ENCODE measurements at regions of chr7 and their contacts with region 1.

Region 1: GRCh38 chr7:30459591-30460257 is 18.9 kb downstream of the NOD1 start:
- DNase-seq: peak; percentile 62
- H3K4me3 ChIP-seq: peak overlapping the region; percentile 29 to 42
- H3K27ac ChIP-seq: peak overlapping the region; percentile 73 to 95
- H3K4me1 ChIP-seq: peaks cover 8 to 39% of the 10 kb centered on the region in 2 experiments
- H3K27me3 ChIP-seq: no peaks in the 10 kb centered on the region
- CTCF ChIP-seq: no peak
- EP300 ChIP-seq: peak; percentile 13 to 87; a peak in 2 of 4 replicates
- RAD21 ChIP-seq: peak; percentile 12; the same call in 1 of the 2 replicates

Region 2: GRCh38 chr7:30406664-30407425 is 52.9 kb before region 1 on chr7:
- CTCF ChIA-PET with region 1: no interaction called
- POLR2A ChIA-PET with region 1: no interaction called
- DNase-seq: no peak
- H3K4me3 ChIP-seq: no peak overlapping the region
- H3K27ac ChIP-seq: no peak overlapping the region
- H3K4me1 ChIP-seq: peaks cover 0 to under 1% of the 10 kb centered on the region in 2 experiments; a peak in 1 of 4 replicates
- H3K27me3 ChIP-seq: no peaks in the 10 kb centered on the region
- CTCF ChIP-seq: no peak
- EP300 ChIP-seq: no peak
- RAD21 ChIP-seq: no peak

Region 3: DNA sequence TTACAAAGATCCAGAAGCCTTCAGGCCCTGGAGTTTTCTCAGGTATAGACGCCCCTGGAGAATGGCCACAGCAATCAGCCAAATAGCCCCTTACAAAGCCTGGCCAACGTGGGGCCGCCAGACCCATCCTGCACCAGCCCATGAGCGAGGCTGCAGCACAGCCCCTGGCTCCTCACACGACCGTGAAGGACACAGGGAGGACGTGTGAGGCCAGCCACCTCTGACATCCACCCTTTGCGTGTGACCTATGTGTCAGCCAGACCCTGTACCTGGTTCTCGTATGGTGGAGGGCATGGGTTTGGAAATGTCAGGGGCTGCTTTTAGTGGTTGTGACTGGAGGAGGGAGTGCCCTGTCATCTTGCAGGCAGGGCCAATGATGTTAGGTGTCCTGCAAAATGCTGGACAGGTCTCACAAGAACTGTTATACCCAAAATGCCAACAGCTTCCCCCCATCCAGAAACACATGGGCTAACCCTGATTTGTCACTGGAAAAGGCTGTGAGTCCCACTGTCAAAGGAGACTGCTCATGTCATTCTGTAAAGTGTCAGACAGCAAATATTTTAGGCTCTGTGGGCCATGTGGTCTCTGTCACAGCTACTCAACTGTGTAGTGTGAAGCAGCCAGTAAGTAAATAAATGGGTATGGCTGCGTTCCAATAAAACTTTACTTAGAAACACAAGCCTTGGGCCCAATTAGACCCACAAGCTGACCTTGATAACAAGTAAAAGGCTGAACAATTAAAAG is 11.1 kb before region 1 on chr7:
- CTCF ChIA-PET with region 1: interaction called, 22 read pairs
- POLR2A ChIA-PET with region 1: interaction called, 5 read pairs
- DNase-seq: peak; percentile 63
- H3K4me3 ChIP-seq: no peak overlapping the region
- H3K27ac ChIP-seq: peak overlapping the region in 1 of 2 experiments; percentile 87; a peak in 2 of 4 replicates
- H3K4me1 ChIP-seq: peaks cover 0 to 27% of the 10 kb centered on the region in 2 experiments; a peak in 1 of 4 replicates
- H3K27me3 ChIP-seq: no peaks in the 10 kb centered on the region
- CTCF ChIP-seq: no peak
- EP300 ChIP-seq: peak in 1 of 2 experiments; percentile 84; a peak in 2 of 4 replicates
- RAD21 ChIP-seq: peak; percentile 2; the same call in 1 of the 2 replicates

Region 4: DNA sequence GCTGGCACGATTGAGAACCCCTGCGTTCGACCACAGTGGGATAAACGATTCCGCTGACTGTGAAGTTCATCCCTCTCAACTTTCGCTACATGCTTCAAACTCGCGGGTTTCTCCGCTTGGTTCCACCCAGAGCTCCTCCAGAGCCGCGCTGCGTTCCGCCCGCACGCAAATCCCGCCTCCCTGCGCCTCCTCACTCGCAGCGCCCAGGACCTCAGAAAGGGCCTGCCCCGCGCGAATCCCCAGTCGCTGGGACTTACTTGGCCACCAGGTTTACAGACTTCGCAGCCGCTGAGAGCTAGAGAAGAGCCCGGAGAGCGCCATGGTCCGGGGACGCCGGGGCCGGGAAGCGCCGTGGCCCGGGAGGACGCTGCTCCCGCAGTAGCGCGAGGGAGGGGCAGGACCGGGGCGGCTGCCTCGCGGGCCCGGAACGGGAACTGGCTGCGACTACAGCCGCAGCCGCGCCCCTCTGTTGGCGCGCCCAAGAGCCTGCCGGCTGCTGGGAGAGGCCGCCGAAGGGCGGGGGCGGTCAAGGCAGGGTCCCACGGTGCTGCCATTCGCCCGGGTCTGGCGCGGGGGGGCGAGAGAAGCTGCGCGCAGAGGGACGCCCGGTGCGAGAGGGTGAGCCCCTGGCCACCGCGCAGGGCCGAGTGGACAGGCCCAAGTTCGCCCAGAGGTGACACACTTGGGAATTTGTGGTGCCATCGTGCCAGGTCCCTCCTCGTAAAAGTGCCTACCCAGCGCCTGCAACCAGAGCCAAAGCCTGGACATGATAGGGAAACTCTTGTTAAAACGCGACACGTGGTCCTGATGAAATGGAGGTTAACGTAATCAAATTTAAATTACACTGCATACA is 18.9 kb after region 1 on chr7 and contains the start of gene NOD1:
- CTCF ChIA-PET with region 1: interaction called, 11 read pairs
- POLR2A ChIA-PET with region 1: interaction called, 10 read pairs
- DNase-seq: peak; percentile 96
- H3K4me3 ChIP-seq: peak within 1 kb of the TSS; percentile 85 to 90
- H3K27ac ChIP-seq: peak within 1 kb of the TSS; percentile 90 to 96
- H3K4me1 ChIP-seq: peaks cover 0 to 36% of the 10 kb centered on the region in 2 experiments; a peak in 2 of 4 replicates
- H3K27me3 ChIP-seq: no peaks in the 10 kb centered on the region
- CTCF ChIP-seq: peak; percentile 19; the same call in 1 of the 2 replicates
- EP300 ChIP-seq: peak in 1 of 2 experiments; percentile 6; a peak in 3 of 4 replicates
- RAD21 ChIP-seq: no peak
- polyA plus RNA-seq, gene NOD1: 5.5 and 5.6 TPM in 2 replicates

Region 5: GRCh38 chr7:30521532-30521931 is 61.8 kb after region 1 on chr7:
- CTCF ChIA-PET with region 1: no interaction called
- POLR2A ChIA-PET with region 1: no interaction called
- DNase-seq: no peak
- H3K4me3 ChIP-seq: no peak overlapping the region
- H3K27ac ChIP-seq: no peak overlapping the region
- H3K4me1 ChIP-seq: no peaks in the 10 kb centered on the region; a peak in 1 of 4 replicates
- H3K27me3 ChIP-seq: no peaks in the 10 kb centered on the region
- CTCF ChIP-seq: no peak
- EP300 ChIP-seq: no peak
- RAD21 ChIP-seq: no peak

Measured in SK-N-SH (cell line).